Right ventricle myocardium inferior (tissue), 1 donor: ENCODE measurements at regions of chr12 and their contacts with region 1.

Region 1: GRCh38 chr12:106223485-106224354 is 24.1 kb downstream of the CKAP4 start:
- DNase-seq: peak; percentile 79
- ATAC-seq: peak; percentile 87

Region 2: GRCh38 chr12:106247674-106248311 is 24.1 kb after region 1 on chr12 and contains the start of gene CKAP4:
- intact Hi-C with region 1: no loop called
- DNase-seq: peak; percentile 92
- ATAC-seq: peak; percentile 87
- total RNA-seq, gene CKAP4: 40.2 TPM

Region 3: DNA sequence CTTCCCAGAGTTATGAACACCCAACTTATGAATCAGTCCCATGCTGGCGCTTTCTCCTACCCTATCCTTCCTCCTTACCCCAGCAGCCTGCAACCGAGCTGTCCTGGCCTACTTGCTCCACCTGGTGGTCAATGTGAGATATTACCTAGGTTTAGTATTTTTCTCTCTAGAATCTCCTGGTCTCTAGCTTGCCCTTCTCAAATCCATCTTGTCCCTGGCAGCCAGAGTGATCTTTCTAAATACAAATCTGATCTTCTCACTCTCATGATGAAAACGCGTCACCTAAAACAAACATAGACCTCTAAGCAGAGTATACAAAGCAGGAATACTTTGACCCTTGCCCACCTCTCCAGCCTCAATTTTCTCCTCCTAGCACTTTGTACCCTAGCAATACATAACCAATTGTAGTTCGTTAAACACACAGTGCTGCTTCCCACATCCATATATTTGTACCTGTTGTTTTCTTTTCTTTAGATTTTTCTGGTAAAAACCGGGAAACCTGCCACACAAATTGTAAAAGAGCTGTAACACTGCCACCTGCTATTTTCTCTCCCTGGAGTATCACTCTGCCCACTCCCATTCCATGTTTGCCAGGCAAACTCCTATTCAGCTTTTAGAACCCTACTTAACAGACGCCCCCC is 58.9 kb after region 1 on chr12:
- intact Hi-C with region 1: loop called (anchors 1 kb)
- DNase-seq: peak; percentile 77
- ATAC-seq: peak; percentile 47

Region 4: GRCh38 chr12:106345739-106346138 is 122.0 kb after region 1 on chr12:
- intact Hi-C with region 1: loop called (anchors 2 kb)
- DNase-seq: no peak
- ATAC-seq: peak; percentile 32